ENCODE measurements at regions of chr19 and their contacts with region 1.

Region 1: GRCh38 chr19:47428177-47428894 is 9.0 kb upstream of the MEIS3 start:
- DNase-seq: peak; percentile 96
- ATAC-seq: peak; percentile 88
- H3K4me3 Mint-ChIP-seq: no peak overlapping the region
- H3K27ac Mint-ChIP-seq: no peak overlapping the region
- H3K4me1 Mint-ChIP-seq: peaks cover 33% of the 10 kb centered on the region
- H3K27me3 Mint-ChIP-seq: peaks cover 54% of the 10 kb centered on the region

Region 2: DNA sequence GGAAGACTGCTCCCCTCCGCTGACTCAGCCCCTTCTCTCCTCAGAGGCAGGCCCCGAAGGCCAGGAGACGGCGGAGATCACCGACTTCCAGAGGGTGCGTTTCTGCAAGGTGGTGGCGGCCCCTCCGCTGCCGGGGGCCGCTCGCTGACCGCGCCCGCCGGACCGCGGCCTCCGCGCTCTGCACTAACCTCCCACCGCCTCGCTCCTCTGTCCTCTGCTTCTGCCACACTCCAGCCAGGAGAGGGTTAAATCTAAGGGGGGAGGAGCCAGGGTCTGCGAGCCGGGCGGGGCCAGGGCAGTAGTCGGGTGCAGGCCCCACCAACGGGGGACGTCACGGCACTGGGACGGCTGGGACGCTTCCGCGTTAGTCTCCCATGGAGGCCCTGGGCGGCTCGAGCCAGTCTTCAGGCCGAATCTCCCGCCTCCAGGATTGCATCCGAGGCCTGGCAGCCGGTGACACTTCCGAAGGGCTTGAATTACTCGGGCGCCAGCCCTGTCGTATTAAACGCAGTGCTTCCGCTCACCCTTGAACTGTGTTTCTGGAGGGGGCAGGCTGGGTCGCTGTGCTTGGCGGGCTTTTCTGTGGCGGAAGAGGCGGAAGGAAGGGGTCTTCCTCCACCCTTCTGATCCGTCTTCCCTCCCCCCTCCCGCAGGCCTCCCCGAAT is 154.9 kb before region 1 on chr19:
- CTCF ChIA-PET with region 1: interaction called, 12 read pairs
- DNase-seq: peak; percentile 97
- ATAC-seq: peak; percentile 81
- H3K4me3 Mint-ChIP-seq: peak overlapping the region; percentile 94
- H3K27ac Mint-ChIP-seq: peak overlapping the region; percentile 98
- H3K4me1 Mint-ChIP-seq: peaks cover 18% of the 10 kb centered on the region
- H3K27me3 Mint-ChIP-seq: no peaks in the 10 kb centered on the region

Region 3: DNA sequence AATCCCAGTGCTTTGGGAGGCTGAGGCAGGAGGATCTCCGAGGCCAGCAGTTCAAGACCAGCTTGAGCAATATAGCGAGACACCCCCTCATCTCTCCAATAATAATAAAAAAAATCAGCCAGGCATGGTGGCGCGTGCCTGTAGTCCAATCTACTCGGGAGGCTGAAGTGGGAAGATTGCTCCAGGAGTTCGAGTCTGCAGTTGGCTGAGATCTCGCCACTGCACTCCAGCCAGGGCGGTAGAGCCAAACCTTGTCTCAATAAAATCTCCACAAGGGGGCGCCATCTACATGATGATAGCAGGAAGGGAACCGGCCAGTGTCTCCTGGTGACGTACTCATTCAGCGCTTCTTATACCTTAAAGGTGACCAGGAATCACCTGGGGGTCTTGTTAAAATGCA is 132.3 kb before region 1 on chr19:
- CTCF ChIA-PET with region 1: interaction called, 42 read pairs
- DNase-seq: peak; percentile 86
- ATAC-seq: peak; percentile 96
- H3K4me3 Mint-ChIP-seq: no peak overlapping the region
- H3K27ac Mint-ChIP-seq: no peak overlapping the region
- H3K4me1 Mint-ChIP-seq: peaks cover 14% of the 10 kb centered on the region
- H3K27me3 Mint-ChIP-seq: no peaks in the 10 kb centered on the region

Region 4: DNA sequence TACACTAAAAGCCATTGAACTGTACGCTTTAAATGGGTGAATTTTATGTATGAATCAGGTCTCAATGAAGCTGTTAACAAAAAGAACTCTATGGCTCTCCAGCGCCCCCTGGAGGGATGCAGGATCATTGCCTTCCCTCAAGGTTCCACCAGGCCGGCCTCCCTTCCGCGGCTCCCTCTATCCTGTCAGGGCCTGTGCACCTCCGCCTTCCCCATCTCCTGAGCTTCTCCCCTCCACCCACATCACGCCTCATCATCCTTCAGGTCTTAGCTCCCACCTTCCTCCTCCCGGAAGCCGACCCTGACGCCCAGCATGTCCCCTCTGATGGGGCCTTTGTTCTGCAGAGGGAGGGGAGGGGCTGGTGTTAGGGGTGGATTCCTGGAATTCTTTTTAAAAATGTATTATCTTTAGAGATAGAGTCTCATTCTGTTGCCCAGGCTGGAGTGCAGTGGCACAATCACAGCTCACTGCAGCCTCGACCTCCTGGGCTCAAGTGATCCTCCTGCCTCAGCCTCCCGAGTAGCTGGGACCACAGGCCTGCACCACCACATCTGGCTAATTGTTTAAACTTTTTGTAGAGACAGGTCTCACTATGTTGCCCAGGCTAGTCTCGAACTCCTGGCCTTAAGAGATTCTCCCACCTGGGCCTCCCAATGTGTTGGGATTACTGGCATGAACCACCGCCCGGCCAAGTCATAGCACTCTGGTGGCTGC is 36.7 kb before region 1 on chr19:
- CTCF ChIA-PET with region 1: interaction called, 14 read pairs
- DNase-seq: peak; percentile 87
- ATAC-seq: peak; percentile 87
- H3K4me3 Mint-ChIP-seq: no peak overlapping the region
- H3K27ac Mint-ChIP-seq: no peak overlapping the region
- H3K4me1 Mint-ChIP-seq: peaks cover 4% of the 10 kb centered on the region
- H3K27me3 Mint-ChIP-seq: peaks cover 4% of the 10 kb centered on the region

Region 5: GRCh38 chr19:47697863-47698609 is 269.7 kb after region 1 on chr19:
- CTCF ChIA-PET with region 1: interaction called, 408 read pairs
- DNase-seq: peak; percentile 71
- ATAC-seq: peak; percentile 81
- H3K4me3 Mint-ChIP-seq: no peak overlapping the region
- H3K27ac Mint-ChIP-seq: no peak overlapping the region
- H3K4me1 Mint-ChIP-seq: peaks cover 2% of the 10 kb centered on the region
- H3K27me3 Mint-ChIP-seq: no peaks in the 10 kb centered on the region

Measured in activated CD8-positive, alpha-beta memory T cell treated with anti-CD3 and anti-CD28 coated beads, Interleukin-2, amount 10 ng/mL, durations not matched to agents 7 days and 5 days (primary cell).